Naive thymus-derived CD4-positive, alpha-beta T cell (primary cell): ENCODE measurements at regions of chr2 and their contacts with region 1.

Region 1: GRCh38 chr2:230643576-230644291 is 68.9 kb upstream of the CAB39 start:
- DNase-seq: peak in 8 of 9 donors; percentile 42 to 72 (median 62)
- ATAC-seq: peak; percentile 93
- H3K4me3 ChIP-seq: peak overlapping the region; percentile 31
- H3K4me3 Mint-ChIP-seq: peak overlapping the region; percentile 23 to 84 (median 72)
- H3K27ac ChIP-seq: peak overlapping the region; percentile 68
- H3K27ac Mint-ChIP-seq: peak overlapping the region; percentile 87 to 98 (median 94)
- H3K4me1 ChIP-seq: peaks cover 20 to 24% of the 10 kb centered on the region in 2 donors
- H3K4me1 Mint-ChIP-seq: peaks cover 14 to 36% (median 24%) of the 10 kb centered on the region in 7 donors
- H3K27me3 ChIP-seq: no peaks in the 10 kb centered on the region
- H3K27me3 Mint-ChIP-seq: no peaks in the 10 kb centered on the region

Region 2: GRCh38 chr2:230677201-230677956 is 33.6 kb after region 1 on chr2:
- CTCF ChIA-PET with region 1: no interaction called
- POLR2A ChIA-PET with region 1: no interaction called
- intact Hi-C with region 1: loop called in 1 of 2 experiments (anchors 5 kb)
- DNase-seq: no peak
- ATAC-seq: no peak
- H3K4me3 ChIP-seq: no peak overlapping the region
- H3K4me3 Mint-ChIP-seq: peak overlapping the region in 2 of 10 donors; percentile 21 to 47
- H3K27ac ChIP-seq: no peak overlapping the region
- H3K27ac Mint-ChIP-seq: peak overlapping the region in 3 of 9 donors; percentile 43 to 88 (median 76)
- H3K4me1 ChIP-seq: no peaks in the 10 kb centered on the region
- H3K4me1 Mint-ChIP-seq: peaks cover 4 to 62% (median 23%) of the 10 kb centered on the region in 7 donors
- H3K27me3 ChIP-seq: no peaks in the 10 kb centered on the region
- H3K27me3 Mint-ChIP-seq: no peaks in the 10 kb centered on the region

Region 3: DNA sequence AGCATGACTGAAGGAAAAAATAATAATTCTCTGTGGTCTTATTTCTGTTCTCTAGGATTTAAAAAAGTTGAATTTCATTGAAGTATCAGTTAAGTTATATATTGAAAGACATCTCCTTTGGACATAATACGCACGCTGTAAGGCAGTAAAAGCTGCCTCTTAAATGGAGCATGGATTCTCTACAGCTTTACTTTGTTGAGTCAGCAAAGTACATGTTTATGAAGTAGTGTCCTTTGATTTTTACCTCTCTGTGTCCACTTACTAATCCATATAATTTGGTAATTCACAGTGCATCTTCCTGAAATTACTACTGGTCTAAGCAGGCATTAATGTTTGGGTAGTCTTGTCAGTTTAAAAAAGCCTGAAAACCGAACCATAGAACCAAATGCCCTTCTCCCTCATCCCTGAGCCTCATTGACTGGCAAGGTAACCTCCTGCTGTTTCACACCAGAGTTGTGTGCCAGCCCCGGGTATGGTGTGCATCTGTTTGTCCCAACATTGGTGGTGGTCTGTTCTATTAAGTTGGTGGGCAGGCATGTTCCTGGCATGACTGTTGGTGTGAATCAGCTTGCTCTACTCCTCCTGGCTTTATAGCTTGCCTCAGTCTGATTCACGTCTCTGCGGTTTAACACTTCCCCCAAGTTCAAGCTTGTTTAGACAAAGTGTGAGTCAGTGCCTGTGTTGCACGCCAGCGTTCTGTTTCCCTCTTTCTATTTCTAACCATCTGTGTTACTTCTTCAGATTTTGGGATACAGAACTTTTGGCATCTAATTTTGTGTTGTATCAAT is 150.0 kb after region 1 on chr2:
- CTCF ChIA-PET with region 1: interaction called, 5 read pairs
- POLR2A ChIA-PET with region 1: interaction called, 7 read pairs
- intact Hi-C with region 1: loop called in 1 of 2 experiments (anchors 2 kb)
- DNase-seq: peak in 8 of 9 donors; percentile 33 to 70 (median 49)
- ATAC-seq: peak; percentile 95
- H3K4me3 ChIP-seq: peak overlapping the region; percentile 3
- H3K4me3 Mint-ChIP-seq: peak overlapping the region; percentile 22 to 82 (median 64)
- H3K27ac ChIP-seq: peak overlapping the region; percentile 39
- H3K27ac Mint-ChIP-seq: peak overlapping the region in 8 of 9 donors; percentile 82 to 94 (median 90)
- H3K4me1 ChIP-seq: peaks cover 34 to 47% of the 10 kb centered on the region in 2 donors
- H3K4me1 Mint-ChIP-seq: peaks cover 20 to 65% (median 55%) of the 10 kb centered on the region in 7 donors
- H3K27me3 ChIP-seq: no peaks in the 10 kb centered on the region
- H3K27me3 Mint-ChIP-seq: no peaks in the 10 kb centered on the region